ENCODE measurements at regions of chr4 and their contacts with region 1.

Region 1: GRCh38 chr4:140884431-140885058 is 128.4 kb upstream of the TBC1D9 start:
- DNase-seq: no peak
- H3K4me3 ChIP-seq: no peak overlapping the region
- H3K27ac ChIP-seq: no peak overlapping the region
- H3K4me1 ChIP-seq: no peaks in the 10 kb centered on the region
- H3K27me3 ChIP-seq: no peaks in the 10 kb centered on the region
- CTCF ChIP-seq: peak in 2 of 3 donors; percentile 15 to 34
- POLR2A ChIP-seq: no peak

Region 2: GRCh38 chr4:141346144-141346543 is 461.6 kb after region 1 on chr4:
- intact Hi-C with region 1: loop called (anchors 10 kb)
- DNase-seq: no peak
- H3K4me3 ChIP-seq: no peak overlapping the region
- H3K27ac ChIP-seq: no peak overlapping the region
- H3K4me1 ChIP-seq: no peaks in the 10 kb centered on the region
- H3K27me3 ChIP-seq: no peaks in the 10 kb centered on the region
- CTCF ChIP-seq: peak in 2 of 3 donors; percentile 26 to 51
- POLR2A ChIP-seq: no peak